Activated CD4-positive, alpha-beta T cell treated with anti-CD3 and anti-CD28 coated beads, Interleukin-2, amount 10 ng/mL, durations not matched to agents 24 days and 14 days (primary cell): ENCODE measurements at regions of chr15 and their contacts with region 1.

Region 1: GRCh38 chr15:74768771-74769342 is 13.0 kb upstream of the CSK start:
- DNase-seq: peak; percentile 90
- H3K4me3 Mint-ChIP-seq: no peak overlapping the region
- H3K27ac Mint-ChIP-seq: no peak overlapping the region
- H3K4me1 Mint-ChIP-seq: peaks cover 24% of the 10 kb centered on the region
- H3K27me3 Mint-ChIP-seq: peaks cover 4% of the 10 kb centered on the region

Region 2: GRCh38 chr15:74635228-74635627 is 133.6 kb before region 1 on chr15:
- intact Hi-C with region 1: loop called (anchors 1 kb)
- DNase-seq: peak; percentile 93
- H3K4me3 Mint-ChIP-seq: no peak overlapping the region
- H3K27ac Mint-ChIP-seq: no peak overlapping the region
- H3K4me1 Mint-ChIP-seq: no peaks in the 10 kb centered on the region
- H3K27me3 Mint-ChIP-seq: no peaks in the 10 kb centered on the region

Region 3: GRCh38 chr15:74787251-74788041 is 18.6 kb after region 1 on chr15:
- intact Hi-C with region 1: loop called (anchors 2 kb)
- DNase-seq: peak; percentile 97
- H3K4me3 Mint-ChIP-seq: peak overlapping the region; percentile 96
- H3K27ac Mint-ChIP-seq: peak overlapping the region; percentile 99
- H3K4me1 Mint-ChIP-seq: peaks cover 68% of the 10 kb centered on the region
- H3K27me3 Mint-ChIP-seq: no peaks in the 10 kb centered on the region

Region 4: GRCh38 chr15:74799856-74800547 is 31.1 kb after region 1 on chr15:
- intact Hi-C with region 1: loop called (anchors 1 kb)
- DNase-seq: peak; percentile 96
- H3K4me3 Mint-ChIP-seq: peak overlapping the region; percentile 58
- H3K27ac Mint-ChIP-seq: peak overlapping the region; percentile 89
- H3K4me1 Mint-ChIP-seq: peaks cover 37% of the 10 kb centered on the region
- H3K27me3 Mint-ChIP-seq: no peaks in the 10 kb centered on the region

Region 5: GRCh38 chr15:74950078-74951000 is 181.5 kb after region 1 on chr15:
- intact Hi-C with region 1: loop called (anchors 1 kb)
- DNase-seq: peak; percentile 95
- H3K4me3 Mint-ChIP-seq: no peak overlapping the region
- H3K27ac Mint-ChIP-seq: no peak overlapping the region
- H3K4me1 Mint-ChIP-seq: peaks cover 16% of the 10 kb centered on the region
- H3K27me3 Mint-ChIP-seq: peaks cover 4% of the 10 kb centered on the region

Region 6: GRCh38 chr15:75362642-75363249 is 593.9 kb after region 1 on chr15:
- intact Hi-C with region 1: no loop called
- DNase-seq: no peak
- H3K4me3 Mint-ChIP-seq: no peak overlapping the region
- H3K27ac Mint-ChIP-seq: no peak overlapping the region
- H3K4me1 Mint-ChIP-seq: peaks cover 8% of the 10 kb centered on the region
- H3K27me3 Mint-ChIP-seq: no peaks in the 10 kb centered on the region